PC-9 (cell line): ENCODE measurements at regions of chr14 and their contacts with region 1.

Region 1: GRCh38 chr14:103078093-103078749 is 5.8 kb upstream of the LBHD2 start:
- DNase-seq: peak; percentile 88 to 93
- H3K4me3 ChIP-seq: no peak overlapping the region
- H3K27ac ChIP-seq: no peak overlapping the region
- H3K4me1 ChIP-seq: peaks cover 28% of the 10 kb centered on the region
- H3K27me3 ChIP-seq: no peaks in the 10 kb centered on the region
- CTCF ChIP-seq: peak; percentile 96

Region 2: DNA sequence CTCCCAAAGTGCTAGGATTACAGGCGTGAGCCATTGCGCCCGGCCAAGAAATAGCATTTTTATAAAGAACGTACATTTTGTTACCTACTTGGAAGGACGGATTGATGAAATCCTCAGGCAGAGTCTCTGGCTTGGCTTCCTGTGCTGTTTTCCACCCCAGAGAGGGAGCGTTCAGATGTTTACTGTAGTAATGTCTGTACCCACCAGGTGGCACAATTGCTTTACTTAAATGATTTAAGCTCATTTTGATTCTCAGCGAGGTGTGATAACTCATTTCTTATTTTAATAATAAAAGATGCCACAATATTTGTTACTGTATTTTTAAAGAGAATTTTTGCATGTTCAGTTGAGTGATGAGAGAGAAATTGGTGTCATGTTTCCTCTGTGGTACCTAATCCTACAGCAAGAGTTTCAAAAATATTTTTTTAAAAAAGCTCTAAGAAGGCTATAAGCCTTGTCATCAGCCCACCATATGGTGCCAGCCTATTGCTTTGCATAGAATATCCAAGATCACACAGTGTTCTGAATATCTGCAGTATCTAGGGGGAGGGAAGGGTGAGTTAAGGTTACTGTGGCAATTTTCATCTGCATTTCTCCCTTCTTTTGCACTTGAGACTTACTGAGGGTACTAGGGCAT is 383.6 kb before region 1 on chr14:
- CTCF ChIA-PET with region 1: interaction called, 5 read pairs
- POLR2A ChIA-PET with region 1: no interaction called
- intact Hi-C with region 1: loop called (anchors 10 kb)
- DNase-seq: peak; percentile 66 to 80
- H3K4me3 ChIP-seq: no peak overlapping the region
- H3K27ac ChIP-seq: no peak overlapping the region
- H3K4me1 ChIP-seq: peaks cover 26% of the 10 kb centered on the region
- H3K27me3 ChIP-seq: no peaks in the 10 kb centered on the region
- CTCF ChIP-seq: peak; percentile 99

Region 3: DNA sequence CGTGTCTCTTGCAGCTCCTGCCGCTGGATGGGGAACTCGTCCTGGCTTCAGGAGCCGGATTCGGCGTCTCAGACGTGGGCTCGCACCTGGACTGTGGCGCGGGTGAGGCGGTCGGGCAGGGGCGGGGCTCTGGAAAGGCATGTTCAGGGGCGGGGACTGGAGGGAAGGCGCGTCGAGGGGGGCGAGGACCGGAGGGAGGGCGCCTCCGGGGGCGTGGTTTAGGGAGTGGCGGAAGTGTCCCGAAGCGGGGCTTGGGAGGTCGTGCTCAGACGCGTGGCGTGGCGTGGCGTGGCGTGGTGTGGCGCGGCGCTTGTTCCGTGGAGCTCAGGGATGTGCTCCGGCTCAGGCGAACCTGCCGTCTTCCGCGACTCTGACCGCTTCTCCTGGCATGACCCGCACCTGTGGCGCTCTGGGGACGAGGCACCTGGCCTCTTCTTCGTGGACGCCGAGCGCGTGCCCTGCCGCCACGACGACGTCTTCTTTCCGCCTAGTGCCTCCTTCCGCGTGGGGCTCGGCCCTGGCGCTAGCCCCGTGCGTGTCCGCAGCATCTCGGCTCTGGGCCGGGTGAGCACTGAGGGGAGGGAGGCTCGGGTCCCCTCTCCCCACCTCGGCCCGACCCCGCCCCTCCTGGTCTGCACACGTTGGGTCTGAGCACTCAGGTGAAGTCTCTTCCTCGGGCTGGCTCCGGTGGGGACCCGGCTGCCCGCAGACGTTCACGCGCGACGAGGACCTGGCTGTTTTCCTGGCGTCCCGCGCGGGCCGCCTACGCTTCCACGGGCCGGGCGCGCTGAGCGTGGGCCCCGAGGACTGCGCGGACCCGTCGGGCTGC is 149.6 kb before region 1 on chr14:
- CTCF ChIA-PET with region 1: no interaction called
- POLR2A ChIA-PET with region 1: interaction called, 3 read pairs
- intact Hi-C with region 1: loop called (anchors 5 kb)
- DNase-seq: peak; percentile 83 to 97
- H3K4me3 ChIP-seq: peak overlapping the region; percentile 87
- H3K27ac ChIP-seq: peak overlapping the region; percentile 74
- H3K4me1 ChIP-seq: peaks cover 20% of the 10 kb centered on the region
- H3K27me3 ChIP-seq: no peaks in the 10 kb centered on the region
- CTCF ChIP-seq: no peak

Region 4: GRCh38 chr14:103061478-103061976 is 16.7 kb before region 1 on chr14:
- CTCF ChIA-PET with region 1: no interaction called
- POLR2A ChIA-PET with region 1: no interaction called
- intact Hi-C with region 1: no loop called
- DNase-seq: no peak
- H3K4me3 ChIP-seq: no peak overlapping the region
- H3K27ac ChIP-seq: no peak overlapping the region
- H3K4me1 ChIP-seq: peaks cover 42% of the 10 kb centered on the region
- H3K27me3 ChIP-seq: no peaks in the 10 kb centered on the region
- CTCF ChIP-seq: no peak

Region 5: DNA sequence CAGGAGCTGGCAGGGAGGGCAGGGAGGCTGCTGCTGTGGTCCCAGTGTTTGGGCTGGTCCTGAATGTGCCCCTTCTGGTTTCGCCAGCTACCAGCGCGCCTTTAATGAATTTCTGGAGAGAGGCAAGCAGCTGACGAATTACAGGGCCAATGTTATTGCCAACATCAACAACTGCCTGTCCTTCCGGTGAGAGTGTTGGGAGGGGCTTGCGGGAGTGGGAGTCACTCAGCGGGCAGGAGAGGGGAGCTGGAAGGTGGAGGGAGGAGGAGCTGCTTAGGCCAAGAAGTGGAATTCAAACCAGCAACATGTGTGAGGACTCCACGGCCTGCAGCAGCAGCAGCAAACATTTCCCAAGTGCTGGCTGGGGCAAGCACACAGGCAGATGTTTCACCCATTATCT is 52.7 kb after region 1 on chr14:
- CTCF ChIA-PET with region 1: interaction called, 3 read pairs
- POLR2A ChIA-PET with region 1: no interaction called
- intact Hi-C with region 1: loop called (anchors 2 kb)
- DNase-seq: peak; percentile 89 to 98
- H3K4me3 ChIP-seq: no peak overlapping the region
- H3K27ac ChIP-seq: peak overlapping the region; percentile 86
- H3K4me1 ChIP-seq: peaks cover 89% of the 10 kb centered on the region
- H3K27me3 ChIP-seq: no peaks in the 10 kb centered on the region
- CTCF ChIP-seq: no peak

Region 6: GRCh38 chr14:103292426-103293374 is 214.5 kb after region 1 on chr14:
- CTCF ChIA-PET with region 1: interaction called, 4 read pairs
- POLR2A ChIA-PET with region 1: no interaction called
- intact Hi-C with region 1: loop called (anchors 1 kb)
- DNase-seq: peak; percentile 68 to 90
- H3K4me3 ChIP-seq: no peak overlapping the region
- H3K27ac ChIP-seq: no peak overlapping the region
- H3K4me1 ChIP-seq: peaks cover 34% of the 10 kb centered on the region
- H3K27me3 ChIP-seq: no peaks in the 10 kb centered on the region
- CTCF ChIP-seq: peak; percentile 100

Region 7: GRCh38 chr14:103354141-103354540 is 275.9 kb after region 1 on chr14:
- CTCF ChIA-PET with region 1: no interaction called
- POLR2A ChIA-PET with region 1: no interaction called
- intact Hi-C with region 1: loop called (anchors 1 kb)
- DNase-seq: no peak
- H3K4me3 ChIP-seq: no peak overlapping the region
- H3K27ac ChIP-seq: no peak overlapping the region
- H3K4me1 ChIP-seq: peaks cover 39% of the 10 kb centered on the region
- H3K27me3 ChIP-seq: no peaks in the 10 kb centered on the region
- CTCF ChIP-seq: no peak